K562 (cell line): ENCODE measurements at regions of chr5 and their contacts with region 1.

Region 1: DNA sequence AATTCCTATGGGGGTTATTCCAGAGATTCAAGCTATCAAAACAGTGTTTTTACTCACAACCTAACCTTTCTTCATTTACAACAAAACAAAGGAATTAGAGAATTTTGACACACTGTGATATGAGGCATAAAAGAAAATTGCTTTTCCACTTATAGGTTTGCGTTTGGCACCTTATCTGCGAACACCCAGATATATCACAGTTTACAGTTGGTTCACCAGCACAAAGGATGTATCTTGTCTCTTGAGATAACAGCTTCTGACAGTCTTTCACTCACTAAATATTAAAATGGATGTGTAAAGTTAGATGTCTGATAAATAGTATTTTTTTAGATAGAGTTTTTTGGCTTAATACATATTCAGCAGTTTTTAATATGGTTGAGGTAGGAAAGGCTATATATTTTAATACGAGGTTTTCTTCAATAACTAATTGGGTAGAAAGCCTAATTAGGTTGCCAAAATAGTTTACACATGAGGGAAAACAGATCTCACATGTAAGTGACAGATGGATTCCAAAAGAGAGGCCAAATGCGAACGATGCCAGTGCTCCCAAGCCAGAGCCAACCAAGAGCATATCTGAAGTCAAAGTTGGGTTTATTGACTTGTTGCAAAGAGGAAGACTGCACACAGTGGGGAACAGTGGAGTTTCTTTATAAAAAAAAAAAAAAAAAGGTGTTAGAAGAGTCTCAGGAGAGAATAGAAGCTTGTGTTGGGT is 1495.2 kb downstream of the MAT2B start:
- DNase-seq: no peak
- ATAC-seq: no peak
- H3K4me3 ChIP-seq: no peak overlapping the region
- H3K27ac ChIP-seq: no peak overlapping the region
- H3K4me1 ChIP-seq: no peaks in the 10 kb centered on the region
- H3K27me3 ChIP-seq: no peaks in the 10 kb centered on the region
- CTCF ChIP-seq: no peak
- EP300 ChIP-seq: no peak
- POLR2A ChIP-seq: no peak
- RAD21 ChIP-seq: no peak

Region 2: DNA sequence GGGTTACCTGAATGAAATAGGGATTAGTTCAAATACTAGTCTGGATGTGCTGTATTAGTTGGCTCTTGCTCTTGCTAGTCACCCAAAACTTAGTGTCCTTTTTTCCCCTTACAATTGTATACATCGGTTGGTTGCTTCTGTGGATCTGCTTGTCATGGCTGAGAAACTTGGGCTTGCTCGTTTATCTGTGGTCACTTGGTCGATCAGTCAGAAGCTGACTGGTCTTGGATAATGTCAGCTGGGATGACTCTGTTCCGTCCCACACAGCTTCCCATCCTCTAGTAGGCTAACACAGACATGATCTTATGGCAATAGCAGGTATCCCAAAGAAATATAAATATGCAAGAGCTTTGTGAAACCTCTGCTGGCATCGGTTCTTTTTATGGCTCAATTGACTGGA is 687.8 kb before region 1 on chr5:
- CTCF ChIA-PET with region 1: interaction called, 3 read pairs
- POLR2A ChIA-PET with region 1: no interaction called
- in situ Hi-C with region 1: loop called (anchors 5 kb)
- intact Hi-C with region 1: no loop called
- DNase-seq: peak in 1 of 4 experiments; percentile 23
- ATAC-seq: peak; percentile 63; the same call in 2 of the 3 replicates
- H3K4me3 ChIP-seq: no peak overlapping the region
- H3K27ac ChIP-seq: no peak overlapping the region
- H3K4me1 ChIP-seq: no peaks in the 10 kb centered on the region; a peak in 1 of 5 replicates
- H3K27me3 ChIP-seq: no peaks in the 10 kb centered on the region
- CTCF ChIP-seq: no peak
- EP300 ChIP-seq: no peak
- POLR2A ChIP-seq: no peak
- RAD21 ChIP-seq: no peak